Caco-2 (cell line): ENCODE measurements at regions of chr6 and their contacts with region 1.

Region 1: GRCh38 chr6:36678518-36679027 is at the start of gene CDKN1A:
- DNase-seq: peak; percentile 83 to 89
- H3K4me3 ChIP-seq: peak within 1 kb of the TSS; percentile 75
- H3K4me3 Mint-ChIP-seq: peak within 1 kb of the TSS; percentile 95
- H3K27ac Mint-ChIP-seq: peak within 1 kb of the TSS; percentile 78
- H3K4me1 ChIP-seq: peaks cover 24% of the 10 kb centered on the region
- H3K4me1 Mint-ChIP-seq: peaks cover 34% of the 10 kb centered on the region
- H3K27me3 ChIP-seq: no peaks in the 10 kb centered on the region
- H3K27me3 Mint-ChIP-seq: no peaks in the 10 kb centered on the region
- CTCF ChIP-seq: no peak
- total RNA-seq, gene CDKN1A: 3.0 and 3.4 TPM in 2 replicates

Region 2: GRCh38 chr6:36615018-36615761 is 63.4 kb before region 1 on chr6:
- CTCF ChIA-PET with region 1: interaction called, 19 read pairs
- POLR2A ChIA-PET with region 1: interaction called, 4 read pairs
- intact Hi-C with region 1: no loop called
- DNase-seq: peak in 1 of 2 experiments; percentile 68
- H3K4me3 ChIP-seq: no peak overlapping the region
- H3K4me3 Mint-ChIP-seq: no peak overlapping the region
- H3K27ac Mint-ChIP-seq: no peak overlapping the region
- H3K4me1 ChIP-seq: no peaks in the 10 kb centered on the region
- H3K4me1 Mint-ChIP-seq: no peaks in the 10 kb centered on the region
- H3K27me3 ChIP-seq: no peaks in the 10 kb centered on the region
- H3K27me3 Mint-ChIP-seq: no peaks in the 10 kb centered on the region
- CTCF ChIP-seq: peak; percentile 67 to 72

Region 3: DNA sequence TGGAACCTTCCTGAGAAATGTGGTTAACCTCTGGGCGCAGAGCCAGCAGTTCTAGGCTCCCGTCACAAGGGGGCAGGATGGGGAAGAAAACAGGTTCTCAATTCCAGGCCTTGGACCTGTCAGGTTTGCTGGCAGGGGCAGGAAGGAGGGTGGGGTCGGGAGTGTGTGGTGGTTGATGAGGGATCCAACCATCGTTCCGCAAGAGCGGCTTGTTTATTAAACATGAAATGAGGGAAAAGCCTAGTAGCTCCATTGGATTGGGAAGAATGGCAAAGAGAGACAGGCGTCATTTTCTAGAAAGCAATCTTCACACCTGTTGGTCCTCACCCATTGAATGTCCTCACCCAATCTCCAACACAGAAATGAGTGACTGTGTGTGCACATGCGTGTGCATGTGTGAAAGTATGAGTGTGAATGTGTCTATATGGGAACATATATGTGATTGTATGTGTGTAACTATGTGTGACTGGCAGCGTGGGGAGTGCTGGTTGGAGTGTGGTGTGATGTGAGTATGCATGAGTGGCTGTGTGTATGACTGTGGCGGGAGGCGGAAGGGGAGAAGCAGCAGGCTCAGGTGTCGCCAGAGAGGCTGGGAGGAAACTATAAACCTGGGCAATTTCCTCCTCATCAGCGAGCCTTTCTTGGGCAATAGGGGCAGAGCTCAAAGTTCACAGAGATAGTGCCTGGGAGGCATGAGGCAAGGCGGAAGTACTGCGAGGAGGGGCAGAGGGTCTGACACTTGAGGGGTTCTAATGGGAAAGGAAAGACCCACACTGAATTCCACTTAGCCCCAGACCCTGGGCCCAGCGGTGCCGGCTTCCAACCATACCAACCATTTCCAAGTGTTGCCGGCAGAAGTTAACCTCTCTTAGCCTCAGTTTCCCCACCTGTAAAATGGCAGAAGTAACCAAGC is 54.8 kb before region 1 on chr6:
- CTCF ChIA-PET with region 1: interaction called, 7 read pairs
- POLR2A ChIA-PET with region 1: interaction called, 4 read pairs
- intact Hi-C with region 1: loop called (anchors 1 kb)
- DNase-seq: peak; percentile 74 to 82
- H3K4me3 ChIP-seq: no peak overlapping the region
- H3K4me3 Mint-ChIP-seq: peak overlapping the region; percentile 24
- H3K27ac Mint-ChIP-seq: peak overlapping the region; percentile 25
- H3K4me1 ChIP-seq: peaks cover 15% of the 10 kb centered on the region
- H3K4me1 Mint-ChIP-seq: peaks cover 20% of the 10 kb centered on the region
- H3K27me3 ChIP-seq: no peaks in the 10 kb centered on the region
- H3K27me3 Mint-ChIP-seq: no peaks in the 10 kb centered on the region
- CTCF ChIP-seq: peak; percentile 77 to 90

Region 4: DNA sequence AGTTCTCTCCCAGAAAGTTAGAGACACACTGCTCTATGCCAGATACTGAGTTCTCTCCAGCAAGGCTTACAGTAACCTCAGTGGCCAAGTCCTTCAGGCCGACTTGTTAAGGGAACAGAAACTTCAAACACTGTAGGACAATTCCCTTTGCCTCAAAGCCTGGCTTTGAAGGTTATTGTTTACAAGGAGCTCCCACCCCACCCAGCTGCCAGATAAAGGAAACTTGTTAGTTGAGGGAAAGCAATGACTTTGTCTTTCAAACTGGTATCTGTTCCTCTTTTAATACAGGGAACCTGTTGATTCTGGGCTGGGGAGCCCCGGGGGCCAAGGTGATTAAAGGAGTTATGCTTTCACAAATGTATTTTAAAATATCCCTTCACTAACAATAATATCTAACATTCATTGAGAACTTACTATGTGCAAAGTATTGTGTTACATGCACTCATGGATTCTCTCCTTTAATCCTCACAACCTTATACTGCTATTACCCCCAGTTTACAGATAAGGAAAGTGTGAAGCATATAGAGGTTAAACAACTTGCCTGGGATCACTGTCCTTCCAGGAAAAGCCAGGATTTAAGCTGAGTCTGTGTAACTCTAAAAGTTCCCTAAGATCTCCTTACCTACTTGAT is 27.6 kb before region 1 on chr6:
- CTCF ChIA-PET with region 1: no interaction called
- POLR2A ChIA-PET with region 1: interaction called, 3 read pairs
- intact Hi-C with region 1: loop called (anchors 2 kb)
- DNase-seq: peak in 1 of 2 experiments; percentile 30
- H3K4me3 ChIP-seq: no peak overlapping the region
- H3K4me3 Mint-ChIP-seq: no peak overlapping the region
- H3K27ac Mint-ChIP-seq: no peak overlapping the region
- H3K4me1 ChIP-seq: no peaks in the 10 kb centered on the region; the same call in none of the 2 replicates
- H3K4me1 Mint-ChIP-seq: peaks cover 6% of the 10 kb centered on the region
- H3K27me3 ChIP-seq: no peaks in the 10 kb centered on the region
- H3K27me3 Mint-ChIP-seq: peaks cover 4% of the 10 kb centered on the region
- CTCF ChIP-seq: no peak

Region 5: DNA sequence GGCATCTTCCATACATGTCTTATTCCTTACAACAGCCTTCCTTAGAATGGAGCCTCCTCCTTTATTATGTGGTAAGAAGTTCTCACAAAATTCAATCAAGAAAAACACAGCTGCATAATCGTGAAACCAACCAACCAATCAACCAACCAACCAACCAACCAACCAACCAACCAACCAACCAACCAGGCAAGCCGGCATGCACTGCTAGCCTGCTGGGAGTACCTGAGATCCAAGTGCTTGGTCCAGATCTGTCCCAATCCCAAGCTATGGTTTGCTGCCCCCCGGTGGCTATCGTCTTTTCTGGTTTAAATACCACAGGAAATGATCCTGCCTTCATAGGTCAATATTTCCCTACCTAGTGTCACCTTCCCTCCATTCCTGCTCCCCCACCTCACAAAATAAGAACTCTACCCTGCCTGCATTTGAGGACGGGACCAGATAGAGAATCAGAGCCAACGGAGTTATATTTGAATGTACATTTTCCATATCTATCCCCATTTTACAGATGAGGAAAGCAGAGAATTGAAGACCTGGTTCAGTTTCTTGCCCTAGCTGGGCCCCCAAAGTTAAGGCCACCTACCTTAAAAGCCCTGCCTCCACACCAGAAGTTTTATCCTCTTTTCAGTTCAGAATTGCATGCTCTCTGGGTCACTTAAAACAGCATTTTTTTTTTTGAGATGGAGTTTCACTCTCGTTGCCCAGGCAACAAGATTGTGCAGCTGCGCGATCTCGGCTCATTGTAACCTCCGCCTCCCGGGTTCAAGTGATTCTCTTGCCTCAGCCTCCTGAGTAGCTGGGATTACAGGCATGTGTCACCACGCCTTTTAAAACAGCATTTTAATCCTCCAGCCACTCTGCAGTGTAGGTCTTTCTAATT is 46.2 kb after region 1 on chr6:
- CTCF ChIA-PET with region 1: interaction called, 4 read pairs
- POLR2A ChIA-PET with region 1: no interaction called
- intact Hi-C with region 1: loop called (anchors 1 kb)
- DNase-seq: peak; percentile 74 to 80
- H3K4me3 ChIP-seq: no peak overlapping the region
- H3K4me3 Mint-ChIP-seq: no peak overlapping the region
- H3K27ac Mint-ChIP-seq: no peak overlapping the region
- H3K4me1 ChIP-seq: no peaks in the 10 kb centered on the region
- H3K4me1 Mint-ChIP-seq: peaks cover 7% of the 10 kb centered on the region
- H3K27me3 ChIP-seq: no peaks in the 10 kb centered on the region
- H3K27me3 Mint-ChIP-seq: no peaks in the 10 kb centered on the region
- CTCF ChIP-seq: peak; percentile 42 to 76

Region 6: GRCh38 chr6:36759148-36759759 is 80.7 kb after region 1 on chr6:
- CTCF ChIA-PET with region 1: interaction called, 8 read pairs
- POLR2A ChIA-PET with region 1: no interaction called
- intact Hi-C with region 1: loop called (anchors 10 kb)
- DNase-seq: peak; percentile 75 to 87
- H3K4me3 ChIP-seq: no peak overlapping the region
- H3K4me3 Mint-ChIP-seq: no peak overlapping the region
- H3K27ac Mint-ChIP-seq: no peak overlapping the region
- H3K4me1 ChIP-seq: no peaks in the 10 kb centered on the region
- H3K4me1 Mint-ChIP-seq: peaks cover 13% of the 10 kb centered on the region
- H3K27me3 ChIP-seq: no peaks in the 10 kb centered on the region
- H3K27me3 Mint-ChIP-seq: peaks cover 2% of the 10 kb centered on the region
- CTCF ChIP-seq: peak; percentile 94 to 99

Region 7: DNA sequence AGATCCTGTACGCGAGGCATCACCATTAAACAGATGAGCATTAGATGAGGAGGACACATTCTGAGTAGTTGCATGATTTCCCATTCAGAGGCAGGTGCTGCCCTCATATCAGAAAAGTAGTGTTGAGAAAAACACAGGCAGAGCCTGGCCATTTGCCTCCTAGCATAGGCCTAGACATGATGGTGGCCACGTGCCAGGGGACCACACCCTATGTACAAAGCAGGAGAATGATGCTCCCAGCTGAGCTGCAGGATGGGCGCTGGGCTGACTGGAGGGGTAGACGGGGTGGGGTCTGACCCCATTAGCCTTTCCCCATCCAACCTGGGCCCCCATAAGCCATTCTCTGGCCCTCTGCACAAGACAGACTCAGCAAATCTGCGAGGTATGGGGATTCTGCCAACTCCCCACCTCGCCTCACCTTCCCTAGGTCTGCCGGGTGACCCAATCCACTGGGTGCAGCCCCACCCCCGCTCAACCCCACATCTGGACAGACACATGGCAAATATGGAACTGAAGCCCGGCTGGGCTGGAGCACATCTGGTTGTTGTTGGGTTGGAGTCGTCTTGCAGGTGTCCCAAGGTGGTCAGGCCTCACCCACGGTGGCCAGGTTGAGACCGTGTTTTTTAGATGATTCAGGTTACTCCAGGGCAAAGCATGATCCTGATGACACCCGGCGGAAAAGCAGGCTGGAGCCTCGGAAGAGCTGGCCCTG is 289.8 kb after region 1 on chr6:
- CTCF ChIA-PET with region 1: no interaction called
- POLR2A ChIA-PET with region 1: no interaction called
- intact Hi-C with region 1: no loop called
- DNase-seq: no peak
- H3K4me3 ChIP-seq: no peak overlapping the region
- H3K4me3 Mint-ChIP-seq: no peak overlapping the region
- H3K27ac Mint-ChIP-seq: no peak overlapping the region
- H3K4me1 ChIP-seq: no peaks in the 10 kb centered on the region
- H3K4me1 Mint-ChIP-seq: no peaks in the 10 kb centered on the region
- H3K27me3 ChIP-seq: no peaks in the 10 kb centered on the region
- H3K27me3 Mint-ChIP-seq: no peaks in the 10 kb centered on the region
- CTCF ChIP-seq: no peak

Region 8: GRCh38 chr6:37207903-37208456 is 529.4 kb after region 1 on chr6:
- CTCF ChIA-PET with region 1: no interaction called
- POLR2A ChIA-PET with region 1: no interaction called
- intact Hi-C with region 1: no loop called
- DNase-seq: peak; percentile 89 to 92
- H3K4me3 ChIP-seq: no peak overlapping the region
- H3K4me3 Mint-ChIP-seq: no peak overlapping the region
- H3K27ac Mint-ChIP-seq: no peak overlapping the region
- H3K4me1 ChIP-seq: peaks cover 25% of the 10 kb centered on the region
- H3K4me1 Mint-ChIP-seq: peaks cover 26% of the 10 kb centered on the region
- H3K27me3 ChIP-seq: no peaks in the 10 kb centered on the region
- H3K27me3 Mint-ChIP-seq: no peaks in the 10 kb centered on the region
- CTCF ChIP-seq: peak; percentile 87 to 89